Activated T-helper 2 cell treated with anti-CD3 and anti-CD28 coated beads, Interferon-gamma antibody, Interleukin-2, Interleukin-4, amounts not matched to agents 10 μg/mL and 5 μg/mL and 100 μg/mL, durations not matched to agents 14 hours and 24 hours and 36 hours (primary cell): ENCODE measurements at regions of chr15 and their contacts with region 1.

Region 1: DNA sequence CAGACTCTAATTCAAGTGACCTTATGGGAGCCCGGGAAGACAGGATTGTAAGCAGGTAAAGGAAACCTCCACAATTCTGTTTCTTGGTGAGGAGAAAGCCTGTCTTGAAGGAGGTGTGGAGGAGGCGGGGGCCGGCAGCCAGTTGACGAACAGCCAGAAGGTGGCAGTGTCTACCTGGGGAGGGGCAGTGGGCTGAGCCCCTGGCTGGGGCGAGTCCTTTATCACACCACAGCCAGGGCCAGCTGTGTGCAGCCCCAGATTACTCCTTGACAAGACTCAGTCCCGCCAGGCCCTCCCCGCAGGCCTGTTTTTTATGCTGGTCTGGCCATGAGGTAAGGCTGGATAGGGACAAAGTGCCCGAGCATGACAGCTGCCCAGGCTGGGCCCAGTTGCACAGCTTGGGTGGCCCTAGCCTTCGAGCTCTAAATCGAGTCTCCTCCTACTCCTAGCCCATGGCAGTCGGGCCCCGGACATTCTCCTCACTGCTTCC is 40.9 kb upstream of the IDH2 start:
- DNase-seq: peak; percentile 70
- H3K4me3 Mint-ChIP-seq: no peak overlapping the region
- H3K27ac Mint-ChIP-seq: peak overlapping the region; percentile 54
- H3K4me1 Mint-ChIP-seq: peaks cover 27% of the 10 kb centered on the region
- H3K27me3 Mint-ChIP-seq: no peaks in the 10 kb centered on the region

Region 2: GRCh38 chr15:90099868-90100831 is 43.1 kb before region 1 on chr15:
- intact Hi-C with region 1: loop called (anchors 2 kb)
- DNase-seq: no peak
- H3K4me3 Mint-ChIP-seq: peak overlapping the region; percentile 90
- H3K27ac Mint-ChIP-seq: peak overlapping the region; percentile 91
- H3K4me1 Mint-ChIP-seq: peaks cover 67% of the 10 kb centered on the region
- H3K27me3 Mint-ChIP-seq: peaks cover 7% of the 10 kb centered on the region

Region 3: GRCh38 chr15:90178468-90179435 is 35.5 kb after region 1 on chr15:
- intact Hi-C with region 1: loop called (anchors 5 kb)
- DNase-seq: no peak
- H3K4me3 Mint-ChIP-seq: no peak overlapping the region
- H3K27ac Mint-ChIP-seq: peak overlapping the region; percentile 14
- H3K4me1 Mint-ChIP-seq: peaks cover 17% of the 10 kb centered on the region
- H3K27me3 Mint-ChIP-seq: peaks cover 6% of the 10 kb centered on the region

Region 4: GRCh38 chr15:90219421-90220166 is 76.4 kb after region 1 on chr15:
- intact Hi-C with region 1: loop called (anchors 1 kb)
- DNase-seq: no peak
- H3K4me3 Mint-ChIP-seq: no peak overlapping the region
- H3K27ac Mint-ChIP-seq: no peak overlapping the region
- H3K4me1 Mint-ChIP-seq: peaks cover 14% of the 10 kb centered on the region
- H3K27me3 Mint-ChIP-seq: no peaks in the 10 kb centered on the region

Region 5: GRCh38 chr15:90286678-90287077 is 143.5 kb after region 1 on chr15:
- intact Hi-C with region 1: loop called (anchors 5 kb)
- DNase-seq: no peak
- H3K4me3 Mint-ChIP-seq: no peak overlapping the region
- H3K27ac Mint-ChIP-seq: no peak overlapping the region
- H3K4me1 Mint-ChIP-seq: peaks cover 1% of the 10 kb centered on the region
- H3K27me3 Mint-ChIP-seq: peaks cover 2% of the 10 kb centered on the region